ENCODE measurements at regions of chr3 and their contacts with region 1.

Region 1: DNA sequence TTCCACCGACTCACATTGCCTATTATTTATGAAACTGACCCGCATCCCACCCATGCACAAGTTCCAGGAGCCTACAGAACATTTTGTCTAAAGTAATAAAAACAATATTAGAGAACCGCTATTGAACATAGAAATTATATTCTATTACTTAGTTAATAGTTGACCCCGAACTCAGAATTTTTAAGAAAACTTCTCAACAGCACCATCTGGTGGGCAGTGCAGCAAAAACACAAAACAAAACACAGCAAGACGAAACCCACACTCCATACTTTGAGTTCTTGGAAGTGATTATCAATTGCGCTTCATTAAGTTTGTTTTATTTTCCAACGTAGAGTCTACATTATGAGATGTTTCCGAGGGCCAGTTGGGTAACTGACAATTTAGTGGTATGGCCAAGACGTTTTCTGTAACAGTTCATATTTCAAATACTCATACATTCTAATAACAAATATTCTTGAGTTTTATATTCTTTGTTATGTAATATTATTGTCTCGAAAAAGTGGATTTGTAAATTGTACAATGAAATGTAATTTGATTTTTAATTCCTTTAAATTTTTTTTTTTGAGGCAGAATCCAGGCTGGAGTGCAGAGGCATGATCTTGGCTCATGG is 24.0 kb upstream of the C3orf70 start:
- H3K4me3 Mint-ChIP-seq: no peak overlapping the region
- H3K27ac Mint-ChIP-seq: no peak overlapping the region
- H3K4me1 Mint-ChIP-seq: peaks cover 28% of the 10 kb centered on the region
- H3K27me3 Mint-ChIP-seq: no peaks in the 10 kb centered on the region

Region 2: GRCh38 chr3:184874709-184875644 is 301.9 kb before region 1 on chr3:
- intact Hi-C with region 1: loop called (anchors 10 kb)
- H3K4me3 Mint-ChIP-seq: no peak overlapping the region
- H3K27ac Mint-ChIP-seq: no peak overlapping the region
- H3K4me1 Mint-ChIP-seq: no peaks in the 10 kb centered on the region
- H3K27me3 Mint-ChIP-seq: no peaks in the 10 kb centered on the region

Region 3: GRCh38 chr3:185264849-185265553 is 88.1 kb after region 1 on chr3:
- intact Hi-C with region 1: no loop called
- H3K4me3 Mint-ChIP-seq: no peak overlapping the region
- H3K27ac Mint-ChIP-seq: no peak overlapping the region
- H3K4me1 Mint-ChIP-seq: no peaks in the 10 kb centered on the region
- H3K27me3 Mint-ChIP-seq: peaks cover 11% of the 10 kb centered on the region

Measured in dendritic cell treated with granulocyte-macrophage colony-stimulating factor and Interleukin-4, amounts not matched to agents 40 ng/mL and 50 ng/mL, for 4 days (primary cell).